Activated B cell treated with CpG ODN at 0.5 μM for 24 hours (primary cell): ENCODE measurements at regions of chr15 and their contacts with region 1.

Region 1: DNA sequence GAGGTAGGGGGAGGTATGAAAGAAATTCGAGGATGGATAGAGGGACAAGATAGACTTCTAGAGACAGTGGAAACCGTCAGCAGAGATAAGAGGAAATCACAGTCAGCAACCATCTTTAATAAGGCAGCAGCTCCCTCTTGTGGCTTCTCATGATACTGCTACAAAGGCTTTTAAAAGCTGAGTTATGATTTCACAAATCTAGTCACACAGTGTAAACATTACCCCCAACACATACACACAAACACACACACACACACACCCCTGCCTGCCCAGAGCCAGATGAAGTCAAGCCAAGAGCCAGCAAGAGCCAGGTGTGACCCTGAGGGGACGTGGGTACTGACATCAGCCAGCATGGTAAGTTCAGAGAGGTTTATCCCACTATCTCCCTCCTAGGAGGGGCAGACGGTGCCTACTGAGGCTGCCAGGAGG is 18.9 kb upstream of the TGM5 start:
- DNase-seq: no peak
- ATAC-seq: peak; percentile 75
- H3K4me3 Mint-ChIP-seq: no peak overlapping the region
- H3K27ac Mint-ChIP-seq: no peak overlapping the region
- H3K4me1 Mint-ChIP-seq: peaks cover 14% of the 10 kb centered on the region
- H3K27me3 Mint-ChIP-seq: peaks cover 2% of the 10 kb centered on the region
- CTCF ChIP-seq: peak; percentile 56

Region 2: DNA sequence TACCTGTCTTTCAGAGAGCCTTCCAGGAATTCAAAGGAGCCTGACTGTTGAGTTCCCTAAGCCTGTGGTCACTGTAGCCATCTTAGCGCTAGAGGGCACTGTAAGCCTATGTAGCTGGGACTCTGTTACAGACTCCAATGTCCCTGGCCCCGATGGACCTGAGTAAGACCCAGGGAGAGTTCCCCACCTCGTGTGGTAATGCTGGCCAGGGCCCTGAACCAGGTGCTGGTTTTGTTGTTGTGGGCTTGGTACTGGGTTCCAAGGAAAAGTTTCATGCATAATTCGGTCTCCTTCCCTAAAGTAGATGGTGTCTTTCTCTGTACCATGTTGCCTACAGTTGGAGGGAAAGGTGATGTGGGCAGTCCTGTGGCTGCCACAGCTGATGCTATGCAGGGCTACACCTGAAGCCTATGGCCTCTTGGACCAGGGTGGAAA is 581.1 kb before region 1 on chr15:
- CTCF ChIA-PET with region 1: interaction called, 6 read pairs
- POLR2A ChIA-PET with region 1: no interaction called
- intact Hi-C with region 1: loop called (anchors 1 kb)
- DNase-seq: peak; percentile 24
- ATAC-seq: peak; percentile 90
- H3K4me3 Mint-ChIP-seq: no peak overlapping the region
- H3K27ac Mint-ChIP-seq: no peak overlapping the region
- H3K4me1 Mint-ChIP-seq: no peaks in the 10 kb centered on the region
- H3K27me3 Mint-ChIP-seq: no peaks in the 10 kb centered on the region
- CTCF ChIP-seq: no peak

Region 3: GRCh38 chr15:43194795-43195194 is 90.8 kb before region 1 on chr15:
- CTCF ChIA-PET with region 1: interaction called, 11 read pairs
- POLR2A ChIA-PET with region 1: no interaction called
- intact Hi-C with region 1: no loop called
- DNase-seq: no peak
- ATAC-seq: no peak
- H3K4me3 Mint-ChIP-seq: no peak overlapping the region
- H3K27ac Mint-ChIP-seq: no peak overlapping the region
- H3K4me1 Mint-ChIP-seq: peaks cover 15% of the 10 kb centered on the region
- H3K27me3 Mint-ChIP-seq: no peaks in the 10 kb centered on the region
- CTCF ChIP-seq: no peak

Region 4: GRCh38 chr15:43225201-43225949 is 60.2 kb before region 1 on chr15:
- CTCF ChIA-PET with region 1: interaction called, 290 read pairs
- POLR2A ChIA-PET with region 1: interaction called, 8 read pairs
- intact Hi-C with region 1: loop called (anchors 1 kb)
- DNase-seq: no peak
- ATAC-seq: peak; percentile 83
- H3K4me3 Mint-ChIP-seq: no peak overlapping the region
- H3K27ac Mint-ChIP-seq: no peak overlapping the region
- H3K4me1 Mint-ChIP-seq: peaks cover 4% of the 10 kb centered on the region
- H3K27me3 Mint-ChIP-seq: peaks cover 8% of the 10 kb centered on the region
- CTCF ChIP-seq: no peak

Region 5: GRCh38 chr15:43241100-43241499 is 44.5 kb before region 1 on chr15:
- CTCF ChIA-PET with region 1: interaction called, 15 read pairs
- POLR2A ChIA-PET with region 1: no interaction called
- intact Hi-C with region 1: no loop called
- DNase-seq: no peak
- ATAC-seq: no peak
- H3K4me3 Mint-ChIP-seq: no peak overlapping the region
- H3K27ac Mint-ChIP-seq: no peak overlapping the region
- H3K4me1 Mint-ChIP-seq: peaks cover 10% of the 10 kb centered on the region
- H3K27me3 Mint-ChIP-seq: peaks cover 4% of the 10 kb centered on the region
- CTCF ChIP-seq: no peak

Region 6: GRCh38 chr15:43270676-43271306 is 14.8 kb before region 1 on chr15:
- CTCF ChIA-PET with region 1: interaction called, 10 read pairs
- POLR2A ChIA-PET with region 1: no interaction called
- intact Hi-C with region 1: no loop called
- DNase-seq: no peak
- ATAC-seq: peak; percentile 95
- H3K4me3 Mint-ChIP-seq: peak overlapping the region; percentile 54
- H3K27ac Mint-ChIP-seq: peak overlapping the region; percentile 91
- H3K4me1 Mint-ChIP-seq: peaks cover 33% of the 10 kb centered on the region
- H3K27me3 Mint-ChIP-seq: no peaks in the 10 kb centered on the region
- CTCF ChIP-seq: no peak